Caco-2 (cell line): ENCODE measurements at regions of chrX and their contacts with region 1.

Region 1: DNA sequence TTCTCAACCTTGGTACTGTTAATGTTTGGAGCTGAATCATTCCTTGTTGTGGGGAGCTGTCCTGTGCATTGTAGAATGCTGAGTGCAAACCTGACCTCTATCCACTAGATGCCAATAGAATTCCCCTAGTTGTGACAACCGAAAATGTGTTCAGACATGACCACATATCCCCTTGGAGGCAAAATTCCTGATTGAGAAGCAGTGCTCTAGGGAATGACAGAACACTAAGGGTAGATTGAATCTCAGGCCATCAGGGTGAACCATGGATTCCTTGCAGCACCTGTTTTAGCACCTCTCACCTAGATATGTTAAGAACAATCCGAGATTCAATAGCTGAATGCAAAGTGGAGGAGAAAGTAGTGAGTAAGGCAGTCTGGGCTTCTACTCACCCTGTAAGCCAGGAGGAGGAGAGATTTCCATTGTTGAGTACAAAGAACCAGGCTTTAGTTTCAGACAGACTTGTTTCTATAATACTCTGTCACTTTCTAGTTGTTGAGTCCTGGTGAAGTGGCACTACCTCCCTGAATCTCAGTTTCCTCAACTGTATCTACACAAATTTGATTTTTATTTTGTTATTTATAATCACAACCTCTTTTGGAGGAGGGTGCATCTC is 111.0 kb upstream of the RAP2C start:
- DNase-seq: peak; percentile 11 to 33
- H3K4me3 ChIP-seq: no peak overlapping the region
- H3K4me3 Mint-ChIP-seq: no peak overlapping the region
- H3K27ac Mint-ChIP-seq: no peak overlapping the region
- H3K4me1 ChIP-seq: peaks cover 26% of the 10 kb centered on the region
- H3K4me1 Mint-ChIP-seq: peaks cover 33% of the 10 kb centered on the region
- H3K27me3 ChIP-seq: no peaks in the 10 kb centered on the region
- H3K27me3 Mint-ChIP-seq: no peaks in the 10 kb centered on the region
- CTCF ChIP-seq: no peak

Region 2: GRCh38 chrX:132226169-132226568 is 104.1 kb before region 1 on chrX:
- CTCF ChIA-PET with region 1: no interaction called
- POLR2A ChIA-PET with region 1: no interaction called
- intact Hi-C with region 1: loop called (anchors 2 kb)
- DNase-seq: no peak
- H3K4me3 ChIP-seq: no peak overlapping the region
- H3K4me3 Mint-ChIP-seq: no peak overlapping the region
- H3K27ac Mint-ChIP-seq: no peak overlapping the region
- H3K4me1 ChIP-seq: no peaks in the 10 kb centered on the region
- H3K4me1 Mint-ChIP-seq: peaks cover 10% of the 10 kb centered on the region
- H3K27me3 ChIP-seq: no peaks in the 10 kb centered on the region
- H3K27me3 Mint-ChIP-seq: no peaks in the 10 kb centered on the region
- CTCF ChIP-seq: peak; percentile 32 to 34

Region 3: GRCh38 chrX:132231587-132231986 is 98.6 kb before region 1 on chrX:
- CTCF ChIA-PET with region 1: no interaction called
- POLR2A ChIA-PET with region 1: no interaction called
- intact Hi-C with region 1: loop called (anchors 1 kb)
- DNase-seq: no peak
- H3K4me3 ChIP-seq: no peak overlapping the region
- H3K4me3 Mint-ChIP-seq: no peak overlapping the region
- H3K27ac Mint-ChIP-seq: no peak overlapping the region
- H3K4me1 ChIP-seq: peaks cover 15% of the 10 kb centered on the region
- H3K4me1 Mint-ChIP-seq: peaks cover 16% of the 10 kb centered on the region
- H3K27me3 ChIP-seq: no peaks in the 10 kb centered on the region
- H3K27me3 Mint-ChIP-seq: no peaks in the 10 kb centered on the region
- CTCF ChIP-seq: no peak

Region 4: GRCh38 chrX:132367984-132368756 is 37.9 kb after region 1 on chrX:
- CTCF ChIA-PET with region 1: no interaction called
- POLR2A ChIA-PET with region 1: no interaction called
- intact Hi-C with region 1: loop called (anchors 1 kb)
- DNase-seq: peak; percentile 70 to 76
- H3K4me3 ChIP-seq: no peak overlapping the region
- H3K4me3 Mint-ChIP-seq: peak overlapping the region; percentile 20
- H3K27ac Mint-ChIP-seq: peak overlapping the region; percentile 85
- H3K4me1 ChIP-seq: peaks cover 50% of the 10 kb centered on the region
- H3K4me1 Mint-ChIP-seq: peaks cover 34% of the 10 kb centered on the region
- H3K27me3 ChIP-seq: no peaks in the 10 kb centered on the region
- H3K27me3 Mint-ChIP-seq: no peaks in the 10 kb centered on the region
- CTCF ChIP-seq: no peak

Region 5: GRCh38 chrX:132375934-132376333 is 45.7 kb after region 1 on chrX:
- CTCF ChIA-PET with region 1: no interaction called
- POLR2A ChIA-PET with region 1: no interaction called
- intact Hi-C with region 1: loop called (anchors 2 kb)
- DNase-seq: no peak
- H3K4me3 ChIP-seq: no peak overlapping the region
- H3K4me3 Mint-ChIP-seq: no peak overlapping the region
- H3K27ac Mint-ChIP-seq: no peak overlapping the region
- H3K4me1 ChIP-seq: peaks cover 19% of the 10 kb centered on the region
- H3K4me1 Mint-ChIP-seq: no peaks in the 10 kb centered on the region
- H3K27me3 ChIP-seq: no peaks in the 10 kb centered on the region
- H3K27me3 Mint-ChIP-seq: no peaks in the 10 kb centered on the region
- CTCF ChIP-seq: peak in 1 of 2 experiments; percentile 26